Caco-2 (cell line): ENCODE measurements at regions of chr2 and their contacts with region 1.

Region 1: DNA sequence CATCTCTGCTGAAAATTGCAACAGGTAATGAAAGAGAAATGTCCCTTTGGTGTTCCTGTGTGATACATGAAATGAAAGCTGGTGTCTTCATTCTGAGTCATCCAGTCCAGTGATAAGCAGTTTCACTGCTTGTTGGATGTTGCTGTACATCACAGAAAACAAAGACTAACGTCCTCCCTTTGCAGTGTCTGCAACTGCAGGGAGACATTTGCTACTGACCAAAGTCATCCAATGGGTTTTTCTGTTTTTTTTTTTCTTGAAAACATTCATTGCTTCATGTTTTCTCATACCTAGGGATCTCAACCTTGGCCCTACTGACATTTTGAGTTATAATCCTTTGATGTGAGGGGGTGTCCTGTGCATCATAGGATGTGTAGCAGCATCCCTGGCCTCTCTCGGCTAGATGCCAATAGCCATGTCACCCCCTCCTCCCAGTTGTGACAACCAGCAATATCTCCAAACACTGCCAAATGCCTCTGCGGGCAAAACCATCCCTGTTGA is 63.6 kb upstream of the FZD5 start:
- DNase-seq: no peak
- H3K4me3 ChIP-seq: no peak overlapping the region
- H3K4me3 Mint-ChIP-seq: no peak overlapping the region
- H3K27ac Mint-ChIP-seq: peak overlapping the region; percentile 86
- H3K4me1 ChIP-seq: peaks cover 50% of the 10 kb centered on the region
- H3K4me1 Mint-ChIP-seq: peaks cover 47% of the 10 kb centered on the region
- H3K27me3 ChIP-seq: no peaks in the 10 kb centered on the region
- H3K27me3 Mint-ChIP-seq: no peaks in the 10 kb centered on the region
- CTCF ChIP-seq: no peak

Region 2: GRCh38 chr2:207777124-207777523 is 56.2 kb before region 1 on chr2:
- CTCF ChIA-PET with region 1: no interaction called
- POLR2A ChIA-PET with region 1: no interaction called
- intact Hi-C with region 1: no loop called
- DNase-seq: no peak
- H3K4me3 ChIP-seq: no peak overlapping the region
- H3K4me3 Mint-ChIP-seq: no peak overlapping the region
- H3K27ac Mint-ChIP-seq: no peak overlapping the region
- H3K4me1 ChIP-seq: peaks cover 52% of the 10 kb centered on the region
- H3K4me1 Mint-ChIP-seq: peaks cover 38% of the 10 kb centered on the region
- H3K27me3 ChIP-seq: no peaks in the 10 kb centered on the region
- H3K27me3 Mint-ChIP-seq: no peaks in the 10 kb centered on the region
- CTCF ChIP-seq: no peak

Region 3: GRCh38 chr2:207792244-207792785 is 41.0 kb before region 1 on chr2:
- CTCF ChIA-PET with region 1: interaction called, 13 read pairs
- POLR2A ChIA-PET with region 1: no interaction called
- intact Hi-C with region 1: no loop called
- DNase-seq: peak; percentile 54 to 62
- H3K4me3 ChIP-seq: no peak overlapping the region
- H3K4me3 Mint-ChIP-seq: peak overlapping the region; percentile 34
- H3K27ac Mint-ChIP-seq: peak overlapping the region; percentile 93
- H3K4me1 ChIP-seq: peaks cover 44% of the 10 kb centered on the region
- H3K4me1 Mint-ChIP-seq: peaks cover 27% of the 10 kb centered on the region
- H3K27me3 ChIP-seq: no peaks in the 10 kb centered on the region
- H3K27me3 Mint-ChIP-seq: no peaks in the 10 kb centered on the region
- CTCF ChIP-seq: no peak

Region 4: DNA sequence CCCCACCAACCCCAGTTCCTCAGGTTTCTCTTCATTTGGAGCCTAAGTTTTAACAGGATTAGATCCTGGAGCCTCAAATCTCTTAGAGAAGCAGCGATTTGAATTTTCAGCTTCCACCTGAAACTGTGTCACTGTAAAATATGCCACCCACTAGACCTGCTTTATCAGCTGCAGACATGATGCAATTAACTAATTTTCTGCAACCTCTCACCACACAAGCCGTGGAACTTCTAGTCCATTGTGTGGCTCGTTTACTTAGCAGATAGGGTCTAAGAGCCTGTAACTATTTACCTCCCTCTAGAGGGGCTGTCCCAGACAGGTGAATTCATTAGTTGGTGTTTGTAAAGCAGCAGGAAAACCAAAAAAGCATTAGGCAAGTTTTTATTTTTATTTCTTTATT is 32.0 kb before region 1 on chr2:
- CTCF ChIA-PET with region 1: interaction called, 5 read pairs
- POLR2A ChIA-PET with region 1: no interaction called
- intact Hi-C with region 1: loop called (anchors 1 kb)
- DNase-seq: peak; percentile 57 to 67
- H3K4me3 ChIP-seq: no peak overlapping the region
- H3K4me3 Mint-ChIP-seq: peak overlapping the region; percentile 25
- H3K27ac Mint-ChIP-seq: peak overlapping the region; percentile 49
- H3K4me1 ChIP-seq: peaks cover 66% of the 10 kb centered on the region
- H3K4me1 Mint-ChIP-seq: peaks cover 33% of the 10 kb centered on the region
- H3K27me3 ChIP-seq: no peaks in the 10 kb centered on the region
- H3K27me3 Mint-ChIP-seq: no peaks in the 10 kb centered on the region
- CTCF ChIP-seq: peak in 1 of 2 experiments; percentile 3

Region 5: DNA sequence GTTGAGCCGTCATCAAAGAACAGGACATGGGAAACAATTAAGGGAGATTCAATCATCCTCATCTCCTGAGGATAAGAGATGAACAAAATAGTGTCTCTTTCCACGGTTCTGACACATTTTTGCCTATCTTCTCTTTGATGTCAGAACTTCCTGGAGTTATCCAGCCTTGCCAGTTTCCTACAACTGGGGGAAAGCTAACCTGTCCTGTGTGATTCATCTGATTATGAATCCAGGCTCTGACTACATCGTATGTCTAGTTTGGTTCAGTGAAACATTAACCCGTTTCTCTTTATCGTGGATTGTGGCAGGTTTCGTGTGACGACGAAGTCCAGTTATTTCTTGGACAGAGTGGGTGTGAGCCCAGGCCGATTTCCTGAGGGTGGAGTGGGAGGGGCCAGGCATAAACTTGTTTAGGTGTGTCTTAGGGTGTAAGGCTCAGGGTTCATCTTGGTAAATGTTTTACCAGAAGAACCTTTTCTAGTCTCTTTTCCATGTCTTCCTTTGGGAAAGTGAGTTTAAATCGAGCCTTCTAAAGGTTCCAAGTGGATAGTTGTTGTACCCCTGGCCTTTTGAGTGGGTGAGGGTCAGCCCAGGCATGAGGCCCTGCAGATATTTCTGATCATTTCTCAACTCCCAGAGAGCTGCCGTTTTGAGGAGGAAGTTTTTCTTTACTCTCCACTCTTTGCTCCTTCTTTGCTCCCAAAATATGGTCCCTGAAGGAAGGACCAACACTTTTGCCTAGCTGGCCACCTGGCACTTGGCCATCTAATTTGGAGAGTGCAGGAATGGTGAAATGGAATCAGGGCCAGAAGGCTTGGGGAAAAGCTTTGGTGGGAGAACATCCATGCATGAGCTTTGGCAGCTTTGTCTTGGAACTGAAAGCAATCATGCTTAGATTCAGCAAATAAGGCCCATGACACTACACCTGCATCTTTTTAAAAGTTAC is 13.2 kb before region 1 on chr2:
- CTCF ChIA-PET with region 1: no interaction called
- POLR2A ChIA-PET with region 1: interaction called, 3 read pairs
- intact Hi-C with region 1: loop called (anchors 1 kb)
- DNase-seq: peak; percentile 92 to 96
- H3K4me3 ChIP-seq: no peak overlapping the region
- H3K4me3 Mint-ChIP-seq: peak overlapping the region; percentile 75
- H3K27ac Mint-ChIP-seq: peak overlapping the region; percentile 96
- H3K4me1 ChIP-seq: peaks cover 51% of the 10 kb centered on the region
- H3K4me1 Mint-ChIP-seq: peaks cover 20% of the 10 kb centered on the region
- H3K27me3 ChIP-seq: no peaks in the 10 kb centered on the region
- H3K27me3 Mint-ChIP-seq: no peaks in the 10 kb centered on the region
- CTCF ChIP-seq: no peak

Region 6: GRCh38 chr2:207869784-207870778 is 36.8 kb after region 1 on chr2:
- CTCF ChIA-PET with region 1: no interaction called
- POLR2A ChIA-PET with region 1: no interaction called
- intact Hi-C with region 1: no loop called
- DNase-seq: peak in 1 of 2 experiments; percentile 57
- H3K4me3 ChIP-seq: no peak overlapping the region
- H3K4me3 Mint-ChIP-seq: no peak overlapping the region
- H3K27ac Mint-ChIP-seq: no peak overlapping the region
- H3K4me1 ChIP-seq: peaks cover 27% of the 10 kb centered on the region
- H3K4me1 Mint-ChIP-seq: peaks cover 6% of the 10 kb centered on the region
- H3K27me3 ChIP-seq: no peaks in the 10 kb centered on the region
- H3K27me3 Mint-ChIP-seq: no peaks in the 10 kb centered on the region
- CTCF ChIP-seq: no peak

Region 7: DNA sequence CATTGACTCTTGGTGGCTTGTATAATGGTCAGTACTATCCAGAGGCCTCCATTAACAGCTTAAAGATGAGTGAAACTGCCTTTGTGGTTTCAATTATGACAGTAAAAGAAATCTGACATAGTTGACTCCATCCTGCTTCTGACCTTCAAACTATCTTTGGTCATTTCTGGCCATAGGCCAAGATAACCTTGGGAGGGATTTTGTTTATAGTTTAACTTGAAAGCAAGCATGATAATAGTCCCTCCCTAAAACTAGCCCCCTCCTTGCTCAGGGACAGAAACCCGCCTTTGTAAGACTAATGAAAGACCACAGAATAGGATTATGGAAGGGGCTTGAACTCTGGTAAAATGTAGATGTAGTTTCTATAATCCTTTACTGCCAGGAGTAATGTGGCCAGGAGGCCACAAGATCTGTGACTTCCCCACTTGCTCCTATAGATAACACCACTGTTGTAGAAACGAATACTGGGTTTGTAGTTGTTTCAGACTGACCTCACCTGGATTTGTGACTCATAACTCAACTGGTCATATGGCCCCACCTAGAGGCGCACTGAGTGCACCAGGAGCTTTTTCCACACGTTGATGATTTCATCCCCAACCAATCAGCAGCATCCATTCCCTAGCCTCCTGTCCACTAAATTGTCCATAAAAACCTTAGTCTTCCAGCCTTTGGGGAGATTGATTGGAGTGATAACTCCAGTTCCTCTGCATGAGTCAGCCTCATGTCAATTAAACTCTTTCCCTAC is 200.6 kb after region 1 on chr2:
- CTCF ChIA-PET with region 1: no interaction called
- POLR2A ChIA-PET with region 1: no interaction called
- intact Hi-C with region 1: loop called (anchors 2 kb)
- DNase-seq: peak; percentile 82 to 85
- H3K4me3 ChIP-seq: no peak overlapping the region
- H3K4me3 Mint-ChIP-seq: no peak overlapping the region
- H3K27ac Mint-ChIP-seq: peak overlapping the region; percentile 70
- H3K4me1 ChIP-seq: peaks cover 51% of the 10 kb centered on the region
- H3K4me1 Mint-ChIP-seq: peaks cover 39% of the 10 kb centered on the region
- H3K27me3 ChIP-seq: no peaks in the 10 kb centered on the region
- H3K27me3 Mint-ChIP-seq: no peaks in the 10 kb centered on the region
- CTCF ChIP-seq: peak; percentile 36

Region 8: GRCh38 chr2:208040199-208041171 is 207.2 kb after region 1 on chr2:
- CTCF ChIA-PET with region 1: interaction called, 10 read pairs
- POLR2A ChIA-PET with region 1: no interaction called
- intact Hi-C with region 1: no loop called
- DNase-seq: peak; percentile 80 to 83
- H3K4me3 ChIP-seq: no peak overlapping the region
- H3K4me3 Mint-ChIP-seq: no peak overlapping the region
- H3K27ac Mint-ChIP-seq: peak overlapping the region; percentile 24
- H3K4me1 ChIP-seq: peaks cover 20% of the 10 kb centered on the region
- H3K4me1 Mint-ChIP-seq: peaks cover 26% of the 10 kb centered on the region
- H3K27me3 ChIP-seq: no peaks in the 10 kb centered on the region
- H3K27me3 Mint-ChIP-seq: no peaks in the 10 kb centered on the region
- CTCF ChIP-seq: peak; percentile 73 to 81

Region 9: DNA sequence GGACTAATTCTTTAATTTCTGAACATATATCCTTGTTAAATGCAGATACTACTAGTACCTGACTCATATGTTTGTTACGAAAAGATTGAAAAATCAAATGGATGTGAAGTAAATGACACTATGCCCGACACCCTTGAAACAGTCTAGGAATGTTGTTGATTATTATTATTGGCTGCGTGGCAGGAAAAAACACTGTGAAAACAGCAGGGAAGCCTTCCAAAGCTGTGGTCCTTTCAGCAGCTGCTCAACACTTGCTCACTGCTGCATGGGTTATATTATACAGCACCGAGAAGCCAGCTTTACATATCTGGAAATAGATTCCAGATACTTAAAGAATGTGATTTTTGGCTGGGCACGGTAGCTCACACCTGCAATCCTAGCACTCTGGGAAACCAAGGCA is 264.5 kb after region 1 on chr2:
- CTCF ChIA-PET with region 1: no interaction called
- POLR2A ChIA-PET with region 1: no interaction called
- intact Hi-C with region 1: no loop called
- DNase-seq: no peak
- H3K4me3 ChIP-seq: no peak overlapping the region
- H3K4me3 Mint-ChIP-seq: no peak overlapping the region
- H3K27ac Mint-ChIP-seq: no peak overlapping the region
- H3K4me1 ChIP-seq: no peaks in the 10 kb centered on the region; the same call in 1 of the 2 replicates
- H3K4me1 Mint-ChIP-seq: peaks cover 14% of the 10 kb centered on the region
- H3K27me3 ChIP-seq: no peaks in the 10 kb centered on the region
- H3K27me3 Mint-ChIP-seq: no peaks in the 10 kb centered on the region
- CTCF ChIP-seq: no peak